ENCODE measurements at regions of chr5 and their contacts with region 1.

Region 1: GRCh38 chr5:103224118-103224893 is 34.3 kb upstream of the MACIR start:
- DNase-seq: peak; percentile 60 to 67
- H3K4me3 ChIP-seq: no peak overlapping the region
- H3K4me3 Mint-ChIP-seq: peak overlapping the region; percentile 37
- H3K27ac Mint-ChIP-seq: no peak overlapping the region
- H3K4me1 ChIP-seq: no peaks in the 10 kb centered on the region
- H3K4me1 Mint-ChIP-seq: no peaks in the 10 kb centered on the region
- H3K27me3 ChIP-seq: no peaks in the 10 kb centered on the region
- H3K27me3 Mint-ChIP-seq: no peaks in the 10 kb centered on the region
- CTCF ChIP-seq: peak; percentile 69 to 79

Region 2: GRCh38 chr5:102536323-102536928 is 687.9 kb before region 1 on chr5:
- CTCF ChIA-PET with region 1: interaction called, 3 read pairs
- POLR2A ChIA-PET with region 1: no interaction called
- intact Hi-C with region 1: loop called (anchors 1 kb)
- DNase-seq: no peak
- H3K4me3 ChIP-seq: no peak overlapping the region
- H3K4me3 Mint-ChIP-seq: no peak overlapping the region
- H3K27ac Mint-ChIP-seq: no peak overlapping the region
- H3K4me1 ChIP-seq: no peaks in the 10 kb centered on the region
- H3K4me1 Mint-ChIP-seq: no peaks in the 10 kb centered on the region
- H3K27me3 ChIP-seq: no peaks in the 10 kb centered on the region
- H3K27me3 Mint-ChIP-seq: no peaks in the 10 kb centered on the region
- CTCF ChIP-seq: peak; percentile 14 to 17

Region 3: GRCh38 chr5:102681407-102681983 is 542.8 kb before region 1 on chr5:
- CTCF ChIA-PET with region 1: interaction called, 3 read pairs
- POLR2A ChIA-PET with region 1: no interaction called
- intact Hi-C with region 1: loop called (anchors 1 kb)
- DNase-seq: peak; percentile 65 to 70
- H3K4me3 ChIP-seq: no peak overlapping the region
- H3K4me3 Mint-ChIP-seq: no peak overlapping the region
- H3K27ac Mint-ChIP-seq: no peak overlapping the region
- H3K4me1 ChIP-seq: no peaks in the 10 kb centered on the region
- H3K4me1 Mint-ChIP-seq: no peaks in the 10 kb centered on the region
- H3K27me3 ChIP-seq: no peaks in the 10 kb centered on the region
- H3K27me3 Mint-ChIP-seq: no peaks in the 10 kb centered on the region
- CTCF ChIP-seq: peak; percentile 63 to 70

Region 4: DNA sequence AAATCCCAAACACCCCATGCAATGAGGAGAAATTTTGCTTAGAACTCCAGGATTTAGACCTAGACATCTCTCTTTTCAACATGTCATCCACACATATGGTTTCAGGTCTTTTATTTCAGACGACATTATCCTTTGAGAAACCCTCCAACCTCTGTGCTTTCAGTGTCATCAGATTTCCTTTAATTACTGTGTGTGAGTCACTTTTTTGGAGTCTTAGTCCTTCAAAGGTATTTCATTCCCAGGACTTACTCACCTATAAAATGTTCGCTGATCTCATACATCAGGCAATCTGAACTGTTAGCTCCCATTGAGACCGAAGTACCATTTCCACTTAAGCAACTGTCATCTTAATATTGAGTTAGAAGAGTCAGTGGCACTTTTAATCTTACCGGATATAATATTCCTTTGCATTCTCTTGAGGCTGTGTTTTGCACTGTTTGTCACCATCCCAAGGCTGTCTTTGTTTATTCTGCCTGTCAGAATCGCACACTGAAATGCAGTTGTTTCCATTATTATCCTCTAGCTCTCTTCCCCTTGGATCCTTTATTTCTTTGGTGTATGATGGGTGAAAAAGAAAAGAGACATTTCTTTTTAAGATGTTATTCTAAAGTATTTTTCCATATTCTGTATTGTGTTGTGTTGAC is 313.9 kb before region 1 on chr5:
- CTCF ChIA-PET with region 1: no interaction called
- POLR2A ChIA-PET with region 1: no interaction called
- intact Hi-C with region 1: no loop called
- DNase-seq: no peak
- H3K4me3 ChIP-seq: no peak overlapping the region
- H3K4me3 Mint-ChIP-seq: no peak overlapping the region
- H3K27ac Mint-ChIP-seq: no peak overlapping the region
- H3K4me1 ChIP-seq: no peaks in the 10 kb centered on the region
- H3K4me1 Mint-ChIP-seq: peaks cover 6% of the 10 kb centered on the region
- H3K27me3 ChIP-seq: no peaks in the 10 kb centered on the region
- H3K27me3 Mint-ChIP-seq: no peaks in the 10 kb centered on the region
- CTCF ChIP-seq: no peak

Region 5: DNA sequence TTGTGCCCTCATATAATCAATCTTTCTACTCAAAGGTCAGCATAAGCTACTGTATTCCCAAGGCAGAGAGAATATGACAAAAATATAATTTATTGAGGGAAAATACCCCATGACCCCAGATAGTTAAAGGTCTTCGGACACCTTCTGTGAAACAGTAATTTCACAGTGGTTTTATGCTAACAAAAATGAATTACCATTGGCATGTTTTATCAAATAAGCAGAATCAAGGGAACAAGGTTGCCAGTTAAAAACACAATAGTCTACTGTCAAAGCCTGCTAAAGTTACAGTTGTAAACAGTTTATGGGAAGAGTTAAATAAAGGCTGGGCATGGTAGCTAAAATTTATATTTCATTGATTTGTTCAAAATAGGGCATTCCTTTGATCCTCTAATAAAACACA is 258.7 kb before region 1 on chr5:
- CTCF ChIA-PET with region 1: no interaction called
- POLR2A ChIA-PET with region 1: no interaction called
- intact Hi-C with region 1: loop called (anchors 1 kb)
- DNase-seq: no peak
- H3K4me3 ChIP-seq: no peak overlapping the region
- H3K4me3 Mint-ChIP-seq: no peak overlapping the region
- H3K27ac Mint-ChIP-seq: no peak overlapping the region
- H3K4me1 ChIP-seq: no peaks in the 10 kb centered on the region
- H3K4me1 Mint-ChIP-seq: no peaks in the 10 kb centered on the region
- H3K27me3 ChIP-seq: no peaks in the 10 kb centered on the region
- H3K27me3 Mint-ChIP-seq: no peaks in the 10 kb centered on the region
- CTCF ChIP-seq: no peak

Region 6: DNA sequence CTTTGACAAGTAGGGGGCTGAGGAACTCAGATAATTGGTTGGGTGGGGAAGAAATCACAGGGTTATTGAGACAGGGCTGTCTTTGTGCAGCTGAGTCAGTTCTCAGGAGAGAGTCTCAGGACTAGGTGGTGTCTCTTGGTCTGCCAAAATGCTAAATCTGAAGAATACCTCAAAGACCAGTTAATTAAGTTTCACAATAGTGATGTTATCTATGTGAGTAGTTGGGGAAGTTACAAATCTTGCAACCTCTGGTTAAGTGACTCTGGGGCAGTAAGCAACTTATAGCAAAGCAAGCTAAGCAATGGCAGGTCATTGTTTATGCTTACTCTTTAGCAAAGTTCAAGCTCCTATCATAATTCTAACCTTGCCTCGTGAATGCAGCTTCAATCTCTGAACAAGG is 158.0 kb before region 1 on chr5:
- CTCF ChIA-PET with region 1: no interaction called
- POLR2A ChIA-PET with region 1: no interaction called
- intact Hi-C with region 1: loop called (anchors 10 kb)
- DNase-seq: no peak
- H3K4me3 ChIP-seq: no peak overlapping the region
- H3K4me3 Mint-ChIP-seq: no peak overlapping the region
- H3K27ac Mint-ChIP-seq: no peak overlapping the region
- H3K4me1 ChIP-seq: peaks cover 8% of the 10 kb centered on the region
- H3K4me1 Mint-ChIP-seq: peaks cover 5% of the 10 kb centered on the region
- H3K27me3 ChIP-seq: no peaks in the 10 kb centered on the region
- H3K27me3 Mint-ChIP-seq: no peaks in the 10 kb centered on the region
- CTCF ChIP-seq: no peak

Region 7: DNA sequence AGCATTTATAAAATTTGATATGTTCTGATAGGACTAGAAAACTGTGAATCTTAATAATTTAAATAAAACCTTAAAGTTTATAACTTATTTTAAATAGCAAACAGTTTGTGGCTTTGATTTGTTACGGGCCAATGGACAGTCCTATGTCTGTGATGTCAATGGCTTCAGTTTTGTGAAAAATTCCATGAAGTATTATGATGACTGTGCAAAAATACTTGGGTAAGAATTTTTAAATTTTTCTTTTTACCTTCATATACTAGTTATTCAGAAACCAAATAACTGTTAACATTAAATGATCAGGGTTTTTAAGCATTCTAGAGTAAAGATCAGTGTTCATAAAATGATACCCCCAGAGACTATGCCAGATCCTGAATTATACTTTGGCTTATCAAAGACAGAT is 73.2 kb before region 1 on chr5:
- CTCF ChIA-PET with region 1: no interaction called
- POLR2A ChIA-PET with region 1: no interaction called
- intact Hi-C with region 1: no loop called
- DNase-seq: no peak
- H3K4me3 ChIP-seq: no peak overlapping the region
- H3K4me3 Mint-ChIP-seq: no peak overlapping the region
- H3K27ac Mint-ChIP-seq: no peak overlapping the region
- H3K4me1 ChIP-seq: no peaks in the 10 kb centered on the region
- H3K4me1 Mint-ChIP-seq: no peaks in the 10 kb centered on the region
- H3K27me3 ChIP-seq: no peaks in the 10 kb centered on the region
- H3K27me3 Mint-ChIP-seq: no peaks in the 10 kb centered on the region
- CTCF ChIP-seq: no peak

Region 8: DNA sequence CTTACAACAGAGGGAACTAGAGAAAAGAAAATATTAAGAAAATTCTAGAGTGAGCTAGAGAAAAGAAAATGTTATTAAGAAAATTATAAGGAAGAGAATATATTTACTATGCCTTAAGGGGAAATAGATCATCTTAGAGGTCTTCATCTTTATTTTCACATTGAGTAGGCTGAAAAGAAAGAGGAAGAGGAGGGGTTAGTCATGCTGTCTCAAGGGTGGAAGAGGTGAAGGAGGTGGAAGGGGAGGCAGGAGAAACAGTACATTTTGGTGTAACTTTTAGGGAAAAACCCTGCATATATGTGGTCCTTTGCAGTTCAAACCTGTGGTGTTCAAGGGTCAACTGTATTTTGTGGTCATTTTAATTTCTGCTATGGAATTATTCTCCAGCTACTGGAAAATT is 57.6 kb before region 1 on chr5:
- CTCF ChIA-PET with region 1: no interaction called
- POLR2A ChIA-PET with region 1: no interaction called
- intact Hi-C with region 1: no loop called
- DNase-seq: no peak
- H3K4me3 ChIP-seq: no peak overlapping the region
- H3K4me3 Mint-ChIP-seq: no peak overlapping the region
- H3K27ac Mint-ChIP-seq: no peak overlapping the region
- H3K4me1 ChIP-seq: no peaks in the 10 kb centered on the region
- H3K4me1 Mint-ChIP-seq: no peaks in the 10 kb centered on the region
- H3K27me3 ChIP-seq: no peaks in the 10 kb centered on the region
- H3K27me3 Mint-ChIP-seq: no peaks in the 10 kb centered on the region
- CTCF ChIP-seq: no peak

Region 9: DNA sequence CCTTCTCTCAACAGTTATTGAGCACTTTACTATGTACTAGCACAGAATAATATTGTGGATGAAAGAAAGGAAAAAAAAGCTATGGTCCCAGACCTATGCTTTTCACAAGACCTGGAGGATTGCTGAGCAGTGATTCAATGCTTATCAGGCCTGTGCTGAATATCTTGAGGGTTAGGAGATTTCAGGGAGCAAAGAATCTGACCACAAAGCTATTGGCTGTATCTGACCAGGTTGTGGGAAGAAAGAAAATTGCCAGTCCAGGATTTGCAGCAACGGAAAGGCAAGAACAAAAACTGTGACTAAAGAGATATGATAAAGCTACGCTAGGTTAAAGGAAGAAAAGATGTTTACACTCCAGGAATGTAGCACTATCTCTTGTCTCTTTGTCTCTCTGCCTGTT is 19.4 kb after region 1 on chr5:
- CTCF ChIA-PET with region 1: no interaction called
- POLR2A ChIA-PET with region 1: no interaction called
- intact Hi-C with region 1: no loop called
- DNase-seq: no peak
- H3K4me3 ChIP-seq: no peak overlapping the region
- H3K4me3 Mint-ChIP-seq: no peak overlapping the region
- H3K27ac Mint-ChIP-seq: no peak overlapping the region
- H3K4me1 ChIP-seq: peaks cover 5% of the 10 kb centered on the region; the same call in 1 of the 2 replicates
- H3K4me1 Mint-ChIP-seq: peaks cover 13% of the 10 kb centered on the region
- H3K27me3 ChIP-seq: no peaks in the 10 kb centered on the region
- H3K27me3 Mint-ChIP-seq: no peaks in the 10 kb centered on the region
- CTCF ChIP-seq: no peak